ENCODE measurements at regions of chr6 and their contacts with region 1.

Region 1: GRCh38 chr6:99822741-99823512 is 171.1 kb downstream of the MCHR2 start:
- DNase-seq: peak; percentile 82
- ATAC-seq: peak; percentile 99
- H3K4me3 ChIP-seq: peak overlapping the region; percentile 56; the same call in 1 of the 2 replicates
- H3K27ac ChIP-seq: no peak overlapping the region
- H3K4me1 ChIP-seq: no peaks in the 10 kb centered on the region
- H3K27me3 ChIP-seq: no peaks in the 10 kb centered on the region
- CTCF ChIP-seq: peak; percentile 70
- POLR2A ChIP-seq: no peak
- RAD21 ChIP-seq: peak; percentile 72

Region 2: GRCh38 chr6:99151634-99152344 is 671.1 kb before region 1 on chr6:
- CTCF ChIA-PET with region 1: no interaction called
- POLR2A ChIA-PET with region 1: no interaction called
- dilution Hi-C with region 1: no loop called
- in situ Hi-C with region 1: no loop called
- intact Hi-C with region 1: loop called (anchors 5 kb)
- DNase-seq: peak; percentile 28
- ATAC-seq: peak; percentile 74
- H3K4me3 ChIP-seq: no peak overlapping the region
- H3K27ac ChIP-seq: no peak overlapping the region
- H3K4me1 ChIP-seq: no peaks in the 10 kb centered on the region
- H3K27me3 ChIP-seq: 0 out of 2 replicates have a peak, but pooled peaks cover 1% of the 10 kb centered on the region
- CTCF ChIP-seq: peak; percentile 46
- POLR2A ChIP-seq: no peak
- RAD21 ChIP-seq: no peak; the same call in 1 of the 2 replicates

Region 3: DNA sequence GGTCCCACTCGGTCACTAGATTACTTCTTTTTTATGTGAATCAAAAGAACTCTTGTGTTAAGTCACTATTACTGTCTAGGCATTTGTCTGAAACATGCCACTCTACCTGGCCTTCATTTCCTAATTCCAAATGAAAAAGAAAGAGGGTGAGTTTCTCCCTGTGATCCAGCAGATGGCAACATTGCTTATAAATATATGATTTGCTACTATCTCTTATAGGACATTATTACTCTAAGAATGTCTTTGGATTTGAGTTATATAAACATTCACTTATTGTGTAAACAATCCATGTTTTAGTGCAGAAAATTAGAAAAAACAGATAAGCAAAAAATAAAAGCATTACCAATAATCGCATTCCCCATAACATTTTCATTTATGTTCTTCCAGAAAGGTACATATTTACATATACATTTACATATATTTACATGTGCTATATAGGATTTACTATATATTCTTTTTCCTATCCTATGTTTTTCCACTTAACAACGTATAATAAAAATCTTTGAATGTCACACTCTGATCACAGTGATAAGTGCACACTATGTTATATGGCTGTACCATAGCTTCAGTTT is 540.4 kb before region 1 on chr6:
- CTCF ChIA-PET with region 1: no interaction called
- POLR2A ChIA-PET with region 1: no interaction called
- dilution Hi-C with region 1: no loop called
- in situ Hi-C with region 1: no loop called
- intact Hi-C with region 1: loop called (anchors 5 kb)
- DNase-seq: peak; percentile 30
- ATAC-seq: peak; percentile 86
- H3K4me3 ChIP-seq: no peak overlapping the region
- H3K27ac ChIP-seq: no peak overlapping the region
- H3K4me1 ChIP-seq: no peaks in the 10 kb centered on the region
- H3K27me3 ChIP-seq: no peaks in the 10 kb centered on the region
- CTCF ChIP-seq: peak; percentile 54
- POLR2A ChIP-seq: no peak
- RAD21 ChIP-seq: peak; percentile 36; the same call in 1 of the 2 replicates

Region 4: GRCh38 chr6:99467509-99468106 is 355.3 kb before region 1 on chr6:
- CTCF ChIA-PET with region 1: interaction called, 4 read pairs
- POLR2A ChIA-PET with region 1: no interaction called
- dilution Hi-C with region 1: no loop called
- in situ Hi-C with region 1: no loop called
- intact Hi-C with region 1: loop called (anchors 2 kb)
- DNase-seq: peak; percentile 32
- ATAC-seq: peak; percentile 51; the same call in 1 of the 2 replicates
- H3K4me3 ChIP-seq: no peak overlapping the region
- H3K27ac ChIP-seq: no peak overlapping the region
- H3K4me1 ChIP-seq: no peaks in the 10 kb centered on the region
- H3K27me3 ChIP-seq: no peaks in the 10 kb centered on the region
- CTCF ChIP-seq: peak; percentile 68
- POLR2A ChIP-seq: no peak
- RAD21 ChIP-seq: peak; percentile 69

Region 5: DNA sequence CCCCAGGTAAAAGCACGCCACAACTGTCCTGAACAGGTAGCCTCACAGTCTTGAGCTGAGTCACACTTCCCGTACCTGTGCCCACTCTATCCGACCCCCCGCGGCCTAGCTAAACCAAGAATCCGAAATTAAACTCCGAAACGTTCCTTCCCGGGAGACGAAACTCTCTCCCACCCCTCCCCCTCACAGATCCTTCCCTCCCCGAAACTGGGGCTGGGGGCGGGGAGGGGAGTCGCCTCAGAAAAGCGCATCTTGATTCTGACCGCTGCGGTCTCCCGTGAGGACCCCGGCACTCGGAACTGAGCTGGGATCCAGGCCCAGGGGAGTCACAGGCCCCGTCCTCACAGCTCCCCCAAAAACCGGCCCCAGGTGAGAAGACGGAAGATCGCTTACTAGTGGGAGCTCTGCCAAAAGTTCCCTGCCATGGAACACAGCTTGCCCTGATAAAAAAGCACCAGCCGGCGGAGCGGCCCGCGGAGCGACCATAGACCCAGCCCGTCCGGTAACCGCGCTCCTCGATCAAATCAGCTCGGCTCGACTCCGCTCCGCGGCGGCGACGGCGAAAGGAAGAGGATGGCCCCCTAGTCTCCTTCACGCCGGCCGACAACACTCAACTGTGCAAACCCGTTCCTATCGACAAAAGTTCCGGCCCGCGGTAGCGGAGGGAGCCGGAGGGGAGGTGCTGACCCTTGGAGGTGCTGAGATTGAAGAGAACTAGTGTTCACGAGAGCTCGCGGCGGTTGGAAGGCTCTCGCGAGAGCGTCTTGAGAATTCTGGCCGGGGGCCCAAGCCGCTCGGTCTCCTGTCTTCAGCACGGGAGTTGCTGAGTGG is 254.6 kb before region 1 on chr6 and contains the start of gene CCNC:
- CTCF ChIA-PET with region 1: no interaction called
- POLR2A ChIA-PET with region 1: no interaction called
- dilution Hi-C with region 1: no loop called
- in situ Hi-C with region 1: no loop called
- intact Hi-C with region 1: loop called (anchors 1 kb)
- DNase-seq: peak; percentile 96
- ATAC-seq: peak; percentile 100
- H3K4me3 ChIP-seq: peak within 1 kb of the TSS; percentile 87
- H3K27ac ChIP-seq: peak within 1 kb of the TSS; percentile 64
- H3K4me1 ChIP-seq: no peaks in the 10 kb centered on the region
- H3K27me3 ChIP-seq: no peaks in the 10 kb centered on the region; the same call in 1 of the 2 replicates
- CTCF ChIP-seq: no peak
- POLR2A ChIP-seq: peak; percentile 91
- RAD21 ChIP-seq: no peak
- total RNA-seq, gene CCNC: 95.7 and 127 TPM in 2 replicates

Region 6: DNA sequence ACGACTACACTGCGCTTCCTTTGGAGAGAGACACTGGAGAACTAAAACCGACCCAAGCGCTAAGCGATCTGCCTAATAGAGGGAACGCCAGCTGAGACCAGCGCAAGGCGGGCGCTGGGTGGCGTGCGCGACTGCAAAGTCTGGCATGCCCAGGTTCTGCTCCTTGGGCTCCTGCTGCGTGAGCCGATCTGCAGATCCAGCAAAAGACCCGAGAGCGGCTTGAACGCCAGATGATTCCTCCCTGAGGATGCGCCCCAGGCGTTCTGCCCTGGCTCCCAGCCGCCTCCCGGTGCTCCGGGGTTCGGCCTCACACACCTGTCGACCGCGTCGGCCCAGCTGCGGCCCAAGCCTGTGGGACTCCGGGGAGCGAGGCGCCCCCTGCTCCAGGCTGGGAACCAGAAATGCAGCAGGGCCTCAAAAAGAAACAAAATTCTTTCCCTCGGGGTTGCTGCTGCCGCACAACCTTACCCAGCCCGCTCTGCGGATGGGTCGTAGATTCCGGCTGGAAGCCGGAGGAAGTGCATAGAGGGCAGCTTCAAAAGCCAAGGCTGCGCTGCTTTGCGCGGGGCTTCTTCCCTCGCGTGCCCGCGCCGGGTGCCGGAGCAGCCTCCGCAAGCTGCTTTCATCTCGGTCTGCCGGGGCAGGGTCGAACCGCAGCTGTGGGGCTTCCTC is 234.2 kb before region 1 on chr6:
- CTCF ChIA-PET with region 1: no interaction called
- POLR2A ChIA-PET with region 1: no interaction called
- dilution Hi-C with region 1: no loop called
- in situ Hi-C with region 1: no loop called
- intact Hi-C with region 1: loop called (anchors 2 kb)
- DNase-seq: peak; percentile 59
- ATAC-seq: peak; percentile 90
- H3K4me3 ChIP-seq: peak overlapping the region; percentile 30
- H3K27ac ChIP-seq: no peak overlapping the region
- H3K4me1 ChIP-seq: no peaks in the 10 kb centered on the region
- H3K27me3 ChIP-seq: peaks cover 72% of the 10 kb centered on the region
- CTCF ChIP-seq: peak; percentile 47
- POLR2A ChIP-seq: no peak
- RAD21 ChIP-seq: peak; percentile 47

Region 7: DNA sequence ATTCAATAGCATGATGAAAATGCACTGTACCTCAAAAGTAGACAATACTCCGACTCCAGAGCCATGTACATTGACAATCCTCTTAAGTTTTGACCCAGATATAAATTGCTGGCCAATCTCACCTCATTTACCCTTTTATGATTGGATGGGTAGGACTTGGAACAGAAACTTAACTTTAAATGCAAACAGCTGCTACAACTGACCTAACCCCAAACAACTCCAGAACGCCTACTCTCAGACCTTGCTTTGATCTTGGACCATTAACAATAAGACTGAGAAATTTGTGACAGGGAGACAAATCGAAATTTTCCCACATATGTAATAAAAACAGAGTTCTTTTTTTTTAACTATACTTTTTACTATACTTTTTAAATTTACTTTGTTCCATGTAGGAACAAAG is 371.6 kb after region 1 on chr6:
- CTCF ChIA-PET with region 1: no interaction called
- POLR2A ChIA-PET with region 1: no interaction called
- dilution Hi-C with region 1: no loop called
- in situ Hi-C with region 1: no loop called
- intact Hi-C with region 1: no loop called
- DNase-seq: no peak
- ATAC-seq: no peak
- H3K4me3 ChIP-seq: no peak overlapping the region
- H3K27ac ChIP-seq: no peak overlapping the region
- H3K4me1 ChIP-seq: peaks cover 2% of the 10 kb centered on the region
- H3K27me3 ChIP-seq: no peaks in the 10 kb centered on the region
- CTCF ChIP-seq: no peak
- POLR2A ChIP-seq: no peak
- RAD21 ChIP-seq: no peak

Measured in IMR-90 (cell line).